ENCODE measurements at regions of chr11 and their contacts with region 1.

Region 1: GRCh38 chr11:111878849-111879636 is at the starts of genes CFAP68 and FDXACB1:
- DNase-seq: peak; percentile 96
- H3K4me3 Mint-ChIP-seq: peak within 1 kb of the TSS; percentile 82
- H3K27ac Mint-ChIP-seq: peak within 1 kb of the TSS; percentile 95
- H3K4me1 Mint-ChIP-seq: peaks cover 21% of the 10 kb centered on the region
- H3K27me3 Mint-ChIP-seq: no peaks in the 10 kb centered on the region
- total RNA-seq, gene CFAP68: 29.9 to 33.6 TPM
- total RNA-seq, gene FDXACB1: 5.2 to 5.6 TPM

Region 2: GRCh38 chr11:111926505-111927391 is 47.7 kb after region 1 on chr11:
- CTCF ChIA-PET with region 1: interaction called, 9 read pairs
- POLR2A ChIA-PET with region 1: no interaction called
- intact Hi-C with region 1: loop called (anchors 1 kb)
- DNase-seq: peak; percentile 98
- H3K4me3 Mint-ChIP-seq: peak overlapping the region; percentile 84
- H3K27ac Mint-ChIP-seq: peak overlapping the region; percentile 86
- H3K4me1 Mint-ChIP-seq: peaks cover 13% of the 10 kb centered on the region
- H3K27me3 Mint-ChIP-seq: no peaks in the 10 kb centered on the region

Region 3: GRCh38 chr11:111982019-111982464 is 103.0 kb after region 1 on chr11:
- CTCF ChIA-PET with region 1: interaction called, 15 read pairs
- POLR2A ChIA-PET with region 1: no interaction called
- intact Hi-C with region 1: loop called (anchors 1 kb)
- DNase-seq: peak; percentile 72
- H3K4me3 Mint-ChIP-seq: no peak overlapping the region
- H3K27ac Mint-ChIP-seq: no peak overlapping the region
- H3K4me1 Mint-ChIP-seq: peaks cover 10% of the 10 kb centered on the region
- H3K27me3 Mint-ChIP-seq: peaks cover 18% of the 10 kb centered on the region

Region 4: DNA sequence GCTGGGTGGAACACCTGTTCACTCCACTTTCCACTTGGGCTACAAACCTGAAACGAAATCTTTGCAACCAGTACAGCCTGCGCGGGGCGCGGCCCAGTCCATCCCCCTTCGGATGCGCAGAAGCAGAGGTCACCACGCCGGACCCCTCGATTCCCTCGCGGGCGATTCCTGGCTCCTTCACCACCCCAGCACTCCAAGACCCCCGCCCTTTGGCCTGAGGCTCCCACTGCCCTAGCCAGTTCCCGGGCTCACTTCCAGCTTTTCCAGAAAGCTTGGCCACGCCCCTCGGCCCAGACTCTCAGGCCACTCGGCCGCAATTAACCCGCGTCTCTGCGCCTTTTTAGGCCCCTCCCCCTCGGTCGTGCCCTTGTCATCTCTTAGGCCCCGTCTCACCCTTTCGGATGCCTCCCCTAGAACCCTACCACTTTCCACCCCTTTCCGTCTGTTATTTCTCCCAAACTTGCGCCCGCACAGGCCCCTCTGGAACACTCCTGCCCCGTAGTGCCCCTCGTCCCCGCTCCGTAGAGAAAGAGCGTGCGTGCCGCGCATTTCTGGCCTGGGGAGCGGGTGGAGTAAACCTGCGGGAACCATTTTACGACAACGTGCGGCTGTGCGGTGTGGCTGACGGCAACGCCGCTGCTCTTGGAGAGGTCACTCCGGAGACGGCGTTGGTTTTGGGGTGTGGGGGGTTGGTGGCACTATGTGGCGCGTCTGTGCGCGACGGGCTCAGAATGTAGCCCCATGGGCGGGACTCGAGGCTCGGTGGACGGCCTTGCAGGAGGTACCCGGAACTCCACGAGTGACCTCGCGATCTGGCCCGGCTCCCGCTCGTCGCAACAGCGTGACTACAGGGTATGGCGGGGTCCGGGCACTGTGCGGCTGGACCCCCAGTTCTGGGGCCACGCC is 146.0 kb after region 1 on chr11 and contains the start of gene DLAT:
- CTCF ChIA-PET with region 1: no interaction called
- POLR2A ChIA-PET with region 1: no interaction called
- intact Hi-C with region 1: loop called (anchors 1 kb)
- DNase-seq: peak; percentile 92
- H3K4me3 Mint-ChIP-seq: peak within 1 kb of the TSS; percentile 98
- H3K27ac Mint-ChIP-seq: peak within 1 kb of the TSS; percentile 98
- H3K4me1 Mint-ChIP-seq: peaks cover 21% of the 10 kb centered on the region
- H3K27me3 Mint-ChIP-seq: no peaks in the 10 kb centered on the region
- total RNA-seq, gene DLAT: 36.4 to 39.0 TPM

Region 5: DNA sequence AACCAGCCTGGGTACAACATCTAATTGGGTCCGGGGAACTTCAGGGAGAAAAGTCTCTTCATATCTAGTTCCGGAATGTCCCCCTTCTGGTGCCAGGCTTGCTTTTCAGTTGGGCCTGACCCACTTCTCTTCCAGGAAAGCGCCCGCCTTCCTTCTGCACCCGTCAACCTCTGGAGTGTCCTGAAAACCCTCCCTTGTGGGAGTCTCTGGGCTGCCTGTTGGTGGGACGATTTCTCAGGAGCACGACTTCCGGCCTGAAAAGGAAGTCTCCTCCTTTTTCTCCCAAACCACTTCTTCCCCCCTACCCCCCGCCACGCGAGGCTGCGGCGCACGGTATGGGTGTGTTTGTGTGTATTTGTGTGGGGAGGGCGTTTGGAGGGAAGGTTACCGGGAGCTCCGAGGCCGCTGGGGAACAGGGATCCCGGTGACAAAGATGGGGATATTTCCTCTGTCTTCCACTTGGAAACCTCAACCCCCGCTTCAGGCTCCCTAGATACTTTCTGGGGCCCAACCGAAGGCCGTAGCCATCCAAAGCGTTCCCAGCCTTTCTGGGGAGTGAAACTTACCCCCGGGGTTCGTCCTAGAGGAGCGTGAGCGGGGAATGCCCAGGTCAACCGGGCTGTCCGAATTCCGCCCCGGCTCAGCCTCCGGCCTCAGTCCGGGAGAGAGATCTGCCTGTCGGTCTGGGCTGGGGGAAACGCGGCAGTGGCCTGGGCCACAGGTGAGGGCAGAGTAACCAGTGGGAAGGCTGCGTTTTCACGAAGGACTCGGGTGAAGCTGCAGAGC is 195.2 kb after region 1 on chr11 and contains the start of gene NKAPD1:
- CTCF ChIA-PET with region 1: no interaction called
- POLR2A ChIA-PET with region 1: no interaction called
- intact Hi-C with region 1: loop called (anchors 2 kb)
- DNase-seq: peak; percentile 87
- H3K4me3 Mint-ChIP-seq: peak within 1 kb of the TSS; percentile 93
- H3K27ac Mint-ChIP-seq: peak within 1 kb of the TSS; percentile 94
- H3K4me1 Mint-ChIP-seq: peaks cover 29% of the 10 kb centered on the region
- H3K27me3 Mint-ChIP-seq: peaks cover 1% of the 10 kb centered on the region
- total RNA-seq, gene NKAPD1: 17.5 to 19.4 TPM

Region 6: GRCh38 chr11:112174789-112175598 is 296.0 kb after region 1 on chr11 and contains the start of gene BCO2:
- CTCF ChIA-PET with region 1: no interaction called
- POLR2A ChIA-PET with region 1: no interaction called
- intact Hi-C with region 1: loop called (anchors 1 kb)
- DNase-seq: peak; percentile 60
- H3K4me3 Mint-ChIP-seq: peak within 1 kb of the TSS; percentile 50
- H3K27ac Mint-ChIP-seq: no peak within 1 kb of the TSS
- H3K4me1 Mint-ChIP-seq: peaks cover 11% of the 10 kb centered on the region
- H3K27me3 Mint-ChIP-seq: peaks cover 16% of the 10 kb centered on the region
- total RNA-seq, gene BCO2: 0.73 to 1.3 TPM

Region 7: DNA sequence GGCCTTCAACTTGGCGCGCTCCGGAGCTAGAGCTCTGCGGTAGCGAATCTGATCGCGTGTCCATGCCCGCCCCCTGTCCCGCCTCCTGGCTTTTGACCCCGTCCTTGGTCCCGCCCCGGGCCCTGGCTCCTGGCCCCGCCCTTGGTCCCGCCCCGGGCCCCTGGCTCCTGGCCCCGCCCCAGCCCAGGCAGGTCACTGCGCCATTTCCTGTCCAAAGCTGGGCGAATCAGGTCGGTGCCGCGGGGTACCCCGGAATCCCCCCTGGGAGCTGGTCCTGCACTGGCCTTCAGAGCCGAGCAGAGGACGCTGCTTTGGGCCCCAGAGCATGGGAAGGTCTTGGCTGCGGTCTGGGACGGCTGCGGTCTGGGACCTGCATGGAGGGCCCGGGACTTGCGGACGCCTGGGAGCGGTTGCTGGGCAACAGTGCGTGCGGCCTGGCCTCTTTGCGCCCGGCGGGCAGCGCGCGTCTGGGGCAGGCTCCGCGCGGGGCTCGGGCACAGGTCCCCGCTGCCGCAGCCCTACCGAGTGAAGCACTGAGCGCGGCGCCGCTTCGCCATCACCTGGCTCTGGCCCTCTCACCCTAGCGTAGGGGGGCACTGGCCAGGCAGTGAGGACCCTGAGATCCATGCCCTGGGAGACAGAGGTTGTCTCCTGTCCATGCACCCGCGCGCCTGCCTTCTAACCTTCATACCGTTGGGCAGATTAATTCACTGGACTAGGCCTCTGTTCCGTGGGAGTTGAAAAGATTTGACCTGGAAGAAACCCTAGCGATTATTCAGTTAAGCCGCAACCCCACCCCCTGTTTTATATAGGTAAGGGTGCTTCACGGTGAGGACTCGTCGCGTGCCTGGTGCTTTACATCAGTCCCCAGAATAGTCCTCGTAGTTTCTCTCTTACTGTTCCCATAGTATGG is 1435.6 kb after region 1 on chr11 and contains the start of gene TTC12:
- CTCF ChIA-PET with region 1: no interaction called
- POLR2A ChIA-PET with region 1: no interaction called
- intact Hi-C with region 1: loop called (anchors 10 kb)
- DNase-seq: peak; percentile 96
- H3K4me3 Mint-ChIP-seq: peak within 1 kb of the TSS; percentile 83
- H3K27ac Mint-ChIP-seq: peak within 1 kb of the TSS; percentile 77
- H3K4me1 Mint-ChIP-seq: peaks cover 23% of the 10 kb centered on the region
- H3K27me3 Mint-ChIP-seq: no peaks in the 10 kb centered on the region
- total RNA-seq, gene TTC12: 7.4 to 8.9 TPM

Measured in activated CD4-positive, alpha-beta memory T cell treated with anti-CD3 and anti-CD28 coated beads for 36 hours (primary cell).